Activated B cell treated with CpG ODN at 0.5 μM for 24 hours (primary cell): ENCODE measurements at regions of chr2 and their contacts with region 1.

Region 1: DNA sequence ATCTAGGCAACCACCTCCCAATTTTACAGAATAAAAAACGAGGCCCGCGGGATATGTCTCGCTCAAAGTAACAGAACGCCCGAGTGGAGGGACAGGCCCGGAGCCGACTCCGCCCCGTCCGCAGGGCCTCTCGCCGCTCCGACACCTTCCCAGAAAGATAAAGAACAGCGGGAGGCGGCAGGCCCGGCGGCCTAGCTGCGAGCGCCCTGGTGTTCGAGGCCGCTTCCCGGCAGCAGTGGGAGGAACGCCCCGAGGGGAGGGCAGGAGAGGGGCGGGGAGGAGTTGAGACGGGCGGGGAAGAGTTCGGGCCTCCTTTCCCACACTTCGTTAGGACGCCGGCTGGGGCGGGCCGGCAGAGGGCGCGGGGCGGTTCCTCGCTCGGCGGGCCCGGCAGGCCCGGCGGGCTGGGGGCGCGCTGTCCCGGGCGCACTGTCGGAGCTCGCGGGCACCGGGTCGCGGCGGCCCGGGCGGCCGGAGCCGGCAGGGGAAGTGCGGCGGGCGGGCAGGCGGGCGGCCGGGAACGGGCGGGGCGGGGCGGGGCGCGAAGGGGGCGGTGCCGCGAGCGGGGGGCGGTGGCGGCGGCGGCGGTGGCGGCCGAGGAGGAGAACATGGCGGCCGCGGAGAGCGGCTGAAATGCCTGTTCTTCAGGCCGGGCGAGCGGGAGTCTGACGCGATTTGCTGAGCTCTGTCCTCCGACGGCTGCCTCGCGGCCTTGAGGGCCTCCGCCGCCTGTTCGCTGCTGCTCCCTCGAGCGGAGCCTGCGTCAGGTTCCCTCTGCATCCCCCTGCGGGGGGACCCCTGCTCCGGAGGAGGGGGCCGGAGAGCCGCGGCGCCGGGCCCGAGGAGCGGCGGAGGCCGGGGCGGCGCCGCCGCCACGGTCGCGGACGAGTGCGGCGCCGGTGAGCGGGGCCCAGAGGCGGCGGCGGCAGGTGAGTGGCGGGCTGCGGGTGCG is at the start of gene NCOA1:
- DNase-seq: peak; percentile 87
- ATAC-seq: peak; percentile 82
- H3K4me3 Mint-ChIP-seq: peak within 1 kb of the TSS; percentile 94
- H3K27ac Mint-ChIP-seq: peak within 1 kb of the TSS; percentile 95
- H3K4me1 Mint-ChIP-seq: peaks cover 42% of the 10 kb centered on the region
- H3K27me3 Mint-ChIP-seq: no peaks in the 10 kb centered on the region
- CTCF ChIP-seq: no peak
- total RNA-seq, gene NCOA1: 44.9 and 49.5 TPM in 2 replicates

Region 2: DNA sequence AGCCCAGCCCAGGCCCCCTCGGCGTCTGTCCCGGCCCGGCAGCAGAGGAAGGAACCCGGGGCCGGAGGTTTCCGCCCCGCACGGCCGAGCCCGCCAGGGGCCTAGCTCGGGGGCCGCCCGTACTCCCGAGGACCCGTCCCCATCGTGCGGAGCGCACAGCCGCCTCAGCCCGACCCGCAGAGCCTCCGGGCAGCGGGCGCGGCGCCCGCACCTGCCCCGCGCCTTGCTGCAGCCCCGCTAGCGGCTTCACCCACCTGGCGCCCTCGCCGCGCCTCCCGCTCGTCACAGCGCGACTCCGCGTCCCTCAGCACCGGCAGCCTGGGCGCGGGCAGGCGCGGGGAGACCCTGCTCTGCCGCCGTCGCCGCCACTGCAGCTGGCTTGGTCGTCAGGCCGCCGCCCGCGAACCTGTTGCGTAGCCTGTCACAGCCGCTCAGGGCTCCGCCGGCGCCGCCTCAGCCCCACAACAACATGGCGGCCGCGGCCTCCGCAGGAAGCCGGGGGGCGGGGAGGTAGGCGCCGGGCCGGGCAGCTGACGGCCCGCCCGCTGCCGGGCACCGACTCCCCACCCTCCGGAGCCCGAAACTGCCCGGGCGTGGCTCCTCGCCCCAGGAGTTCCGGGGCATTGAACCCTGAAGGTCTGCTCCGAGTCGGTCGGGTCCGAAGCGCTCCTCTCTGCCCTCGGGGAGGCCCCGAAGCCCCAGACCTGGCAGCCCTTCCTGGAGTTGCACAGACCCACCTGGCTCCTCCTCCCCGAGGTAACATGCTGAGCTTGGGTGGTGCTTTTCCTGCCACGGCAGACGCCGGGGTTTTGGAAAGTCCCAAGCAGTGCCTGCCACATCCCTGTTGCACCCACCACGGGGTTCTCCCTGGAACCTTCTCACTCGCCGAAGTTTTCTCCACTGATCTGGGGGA is 130.6 kb before region 1 on chr2 and contains the start of gene ITSN2:
- CTCF ChIA-PET with region 1: no interaction called
- POLR2A ChIA-PET with region 1: no interaction called
- intact Hi-C with region 1: loop called (anchors 5 kb)
- DNase-seq: peak; percentile 88
- ATAC-seq: peak; percentile 85
- H3K4me3 Mint-ChIP-seq: peak within 1 kb of the TSS; percentile 91
- H3K27ac Mint-ChIP-seq: peak within 1 kb of the TSS; percentile 97
- H3K4me1 Mint-ChIP-seq: peaks cover 50% of the 10 kb centered on the region
- H3K27me3 Mint-ChIP-seq: no peaks in the 10 kb centered on the region
- CTCF ChIP-seq: no peak
- total RNA-seq, gene ITSN2: 147 and 156 TPM in 2 replicates

Region 3: DNA sequence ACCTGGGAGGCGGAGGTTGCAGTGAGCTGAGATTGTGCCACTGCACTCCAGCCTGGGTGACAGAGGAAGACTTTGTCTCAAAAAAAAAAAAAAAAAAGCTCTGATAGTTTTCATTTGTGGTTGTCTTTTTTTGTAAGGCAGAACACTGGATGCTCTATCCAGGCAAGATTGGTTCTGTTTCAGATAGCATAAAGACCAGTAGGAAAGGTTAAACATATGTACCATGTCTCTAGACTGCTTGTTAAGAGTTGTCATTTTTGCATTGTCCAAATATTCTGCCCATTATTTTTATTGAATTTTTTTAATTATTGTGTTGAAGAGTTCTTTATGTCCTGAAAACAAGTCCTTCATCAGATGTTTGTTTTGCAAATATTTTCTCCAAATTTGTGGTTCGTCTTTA is 60.1 kb after region 1 on chr2:
- CTCF ChIA-PET with region 1: no interaction called
- POLR2A ChIA-PET with region 1: interaction called, 11 read pairs
- intact Hi-C with region 1: no loop called
- DNase-seq: no peak
- ATAC-seq: no peak
- H3K4me3 Mint-ChIP-seq: no peak overlapping the region
- H3K27ac Mint-ChIP-seq: no peak overlapping the region
- H3K4me1 Mint-ChIP-seq: peaks cover 18% of the 10 kb centered on the region
- H3K27me3 Mint-ChIP-seq: no peaks in the 10 kb centered on the region
- CTCF ChIP-seq: no peak

Region 4: GRCh38 chr2:24652265-24653182 is 161.6 kb after region 1 on chr2:
- CTCF ChIA-PET with region 1: no interaction called
- POLR2A ChIA-PET with region 1: no interaction called
- intact Hi-C with region 1: loop called (anchors 5 kb)
- DNase-seq: no peak
- ATAC-seq: peak; percentile 52
- H3K4me3 Mint-ChIP-seq: no peak overlapping the region
- H3K27ac Mint-ChIP-seq: peak overlapping the region; percentile 78
- H3K4me1 Mint-ChIP-seq: peaks cover 39% of the 10 kb centered on the region
- H3K27me3 Mint-ChIP-seq: no peaks in the 10 kb centered on the region
- CTCF ChIP-seq: no peak

Region 5: DNA sequence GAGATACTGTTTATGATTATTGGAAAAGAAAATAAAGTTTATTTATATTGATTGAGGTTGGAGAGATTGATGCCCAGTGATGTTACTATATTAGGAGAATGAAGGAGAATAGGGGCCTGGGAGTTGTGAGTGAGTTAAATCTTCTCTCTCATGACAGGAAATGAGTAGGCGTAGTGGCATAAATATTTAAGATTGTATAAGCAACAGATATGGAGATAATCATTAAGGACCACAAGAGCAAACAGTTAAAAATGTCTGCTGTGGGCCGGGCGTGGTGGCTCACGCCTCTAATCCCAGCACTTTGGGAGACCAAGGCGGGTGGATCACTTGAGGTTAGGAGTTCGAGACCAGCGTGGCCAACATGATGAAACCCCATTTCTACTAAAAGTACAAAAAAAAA is 239.5 kb after region 1 on chr2:
- CTCF ChIA-PET with region 1: no interaction called
- POLR2A ChIA-PET with region 1: interaction called, 10 read pairs
- intact Hi-C with region 1: no loop called
- DNase-seq: no peak
- ATAC-seq: no peak
- H3K4me3 Mint-ChIP-seq: no peak overlapping the region
- H3K27ac Mint-ChIP-seq: no peak overlapping the region
- H3K4me1 Mint-ChIP-seq: no peaks in the 10 kb centered on the region
- H3K27me3 Mint-ChIP-seq: no peaks in the 10 kb centered on the region
- CTCF ChIP-seq: no peak

Region 6: GRCh38 chr2:24827321-24828237 is 336.6 kb after region 1 on chr2:
- CTCF ChIA-PET with region 1: no interaction called
- POLR2A ChIA-PET with region 1: interaction called, 5 read pairs
- intact Hi-C with region 1: loop called (anchors 5 kb)
- DNase-seq: peak; percentile 41
- ATAC-seq: peak; percentile 86
- H3K4me3 Mint-ChIP-seq: no peak overlapping the region
- H3K27ac Mint-ChIP-seq: no peak overlapping the region
- H3K4me1 Mint-ChIP-seq: peaks cover 3% of the 10 kb centered on the region
- H3K27me3 Mint-ChIP-seq: no peaks in the 10 kb centered on the region
- CTCF ChIP-seq: peak; percentile 38